Mammary epithelial cell (primary cell): ENCODE measurements at regions of chr7 and their contacts with region 1.

Region 1: GRCh38 chr7:135645296-135645904 is 16.9 kb upstream of the STMP1 start:
- DNase-seq: peak; percentile 26
- H3K4me3 ChIP-seq: no peak overlapping the region
- H3K27ac ChIP-seq: no peak overlapping the region
- H3K4me1 ChIP-seq: no peaks in the 10 kb centered on the region
- H3K27me3 ChIP-seq: no peaks in the 10 kb centered on the region
- CTCF ChIP-seq: peak; percentile 70 to 73

Region 2: DNA sequence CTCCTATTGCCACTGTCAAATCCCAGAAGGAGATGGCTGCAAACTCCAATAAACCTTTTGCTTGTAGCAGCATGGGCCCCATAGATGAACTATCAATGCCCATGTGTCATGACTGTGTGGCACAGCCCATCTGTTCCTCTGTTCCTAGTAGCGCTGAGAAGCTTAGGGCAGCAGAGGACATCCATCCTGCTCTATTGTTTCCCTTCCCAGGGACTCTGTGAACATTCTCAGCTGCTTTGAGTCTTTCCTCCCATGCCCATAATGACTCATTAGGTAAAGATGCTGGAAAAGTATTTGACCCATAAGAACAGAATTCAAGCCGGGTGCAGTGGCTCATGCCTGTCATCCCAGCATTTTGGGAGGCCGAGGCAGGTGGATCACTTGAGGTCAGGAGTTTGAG is 45.2 kb after region 1 on chr7:
- CTCF ChIA-PET with region 1: no interaction called
- dilution Hi-C with region 1: loop called (anchors 5 kb)
- in situ Hi-C with region 1: no loop called
- intact Hi-C with region 1: no loop called
- DNase-seq: no peak
- H3K4me3 ChIP-seq: no peak overlapping the region
- H3K27ac ChIP-seq: no peak overlapping the region
- H3K4me1 ChIP-seq: no peaks in the 10 kb centered on the region
- H3K27me3 ChIP-seq: no peaks in the 10 kb centered on the region
- CTCF ChIP-seq: no peak

Region 3: DNA sequence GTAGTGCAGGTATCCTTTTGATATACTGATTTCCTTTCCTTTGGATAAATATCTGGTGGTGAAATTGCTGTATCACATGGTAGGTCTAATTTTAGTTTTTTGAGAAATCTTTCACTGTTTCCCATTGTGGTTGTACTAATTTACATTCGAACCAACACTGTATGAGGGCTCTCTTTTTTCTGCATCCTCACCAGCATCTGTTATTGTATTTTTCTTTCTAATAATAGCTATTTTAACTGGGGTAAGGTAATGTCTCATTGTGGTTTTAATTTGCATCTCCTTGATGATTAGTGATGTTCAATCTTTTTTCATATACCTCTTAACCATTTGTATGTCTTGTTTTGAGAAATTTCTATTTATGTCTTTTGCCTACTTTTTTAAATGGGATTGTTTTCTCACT is 667.2 kb after region 1 on chr7:
- CTCF ChIA-PET with region 1: no interaction called
- dilution Hi-C with region 1: no loop called
- in situ Hi-C with region 1: no loop called
- intact Hi-C with region 1: no loop called
- DNase-seq: no peak
- H3K4me3 ChIP-seq: no peak overlapping the region
- H3K27ac ChIP-seq: no peak overlapping the region
- H3K4me1 ChIP-seq: no peaks in the 10 kb centered on the region
- H3K27me3 ChIP-seq: no peaks in the 10 kb centered on the region
- CTCF ChIP-seq: no peak